ENCODE measurements at regions of chr7 and their contacts with region 1.

Region 1: DNA sequence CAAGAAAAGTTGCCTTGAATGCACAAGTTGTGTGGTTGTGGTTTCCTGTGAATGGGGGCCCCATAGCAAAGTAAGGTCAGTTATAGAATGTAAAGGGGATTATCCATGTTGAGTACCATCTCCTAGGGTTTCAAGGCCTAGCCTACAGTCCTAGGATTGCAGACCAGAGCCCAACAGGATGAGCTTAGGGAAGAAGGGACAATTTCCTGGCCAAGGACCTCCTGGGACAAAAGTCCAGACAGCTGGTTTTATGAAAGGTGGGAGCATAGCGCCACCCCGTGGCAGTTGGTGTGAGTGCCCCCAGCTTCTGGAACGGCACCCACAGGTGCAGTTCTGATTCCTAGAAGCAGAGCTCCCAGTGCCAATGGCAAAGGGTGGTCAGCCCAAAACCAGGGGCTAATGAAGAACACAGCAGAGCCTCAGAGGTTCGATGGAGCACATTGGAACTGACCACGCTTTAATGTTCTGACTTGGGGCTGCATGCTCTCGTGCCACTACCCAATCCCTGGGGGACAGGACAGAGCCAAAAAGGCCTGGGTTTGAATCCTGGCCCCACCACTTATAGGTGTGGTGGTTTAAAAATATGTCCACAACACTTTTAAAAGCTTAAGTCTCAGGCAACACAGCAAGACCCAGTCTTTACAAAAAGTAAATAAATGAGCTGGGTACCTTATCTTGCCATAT is 25.8 kb upstream of the TMEM120A start:
- DNase-seq: peak; percentile 87
- ATAC-seq: peak; percentile 53

Region 2: DNA sequence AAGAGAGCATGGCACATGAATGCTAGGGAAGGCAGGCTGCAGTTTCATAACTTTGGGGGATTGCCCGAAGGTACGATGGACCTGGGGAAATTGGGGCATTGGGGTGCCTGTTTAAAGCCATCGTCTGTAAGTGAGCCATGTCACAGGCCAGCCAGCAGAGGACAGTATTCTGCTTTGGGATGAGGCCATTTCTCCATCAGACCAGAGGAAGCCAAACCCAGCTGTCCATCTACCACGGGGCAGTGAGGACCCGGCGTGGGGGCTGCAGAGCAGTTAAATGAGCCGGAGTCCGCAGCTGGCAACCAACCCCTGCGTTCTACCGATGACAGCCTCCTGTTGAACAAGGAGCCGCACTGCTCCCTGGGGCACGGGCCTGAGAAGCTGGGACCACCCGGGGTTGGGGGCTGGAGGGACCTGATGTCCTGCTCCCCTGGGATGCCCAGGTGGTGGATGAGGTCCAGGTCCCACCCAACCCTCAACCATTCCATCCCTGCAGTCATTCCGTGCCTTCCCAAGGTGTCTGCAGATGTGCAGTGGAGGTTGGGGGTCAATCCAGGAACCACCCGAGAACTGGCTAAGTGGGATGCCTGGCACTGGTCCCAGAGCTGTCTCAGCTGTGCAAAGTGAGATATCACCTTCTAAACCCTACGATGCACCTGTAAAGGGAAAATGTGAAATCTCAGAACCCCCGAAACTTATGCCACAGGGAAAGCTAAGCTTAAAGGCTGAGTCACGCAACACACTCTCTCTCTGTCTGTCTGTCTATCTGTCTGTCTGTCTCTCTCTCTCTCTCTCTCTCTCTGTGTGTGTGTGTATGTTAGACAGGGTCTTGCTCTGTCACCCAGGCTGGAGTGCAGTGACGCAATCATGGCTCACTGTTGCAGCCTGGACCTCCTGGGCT is 153.4 kb before region 1 on chr7:
- intact Hi-C with region 1: loop called (anchors 1 kb)
- DNase-seq: no peak
- ATAC-seq: peak; percentile 85

Measured in Right ventricle myocardium inferior (tissue), 1 donor.